Dendritic cell treated with granulocyte-macrophage colony-stimulating factor and Interleukin-4, amounts not matched to agents 40 ng/mL and 50 ng/mL, for 4 days (primary cell): ENCODE measurements at regions of chr20 and their contacts with region 1.

Region 1: GRCh38 chr20:5529331-5530148 is 212.8 kb upstream of the PROKR2 start:
- H3K4me3 Mint-ChIP-seq: no peak overlapping the region
- H3K27ac Mint-ChIP-seq: no peak overlapping the region
- H3K4me1 Mint-ChIP-seq: peaks cover 66% of the 10 kb centered on the region
- H3K27me3 Mint-ChIP-seq: no peaks in the 10 kb centered on the region

Region 2: DNA sequence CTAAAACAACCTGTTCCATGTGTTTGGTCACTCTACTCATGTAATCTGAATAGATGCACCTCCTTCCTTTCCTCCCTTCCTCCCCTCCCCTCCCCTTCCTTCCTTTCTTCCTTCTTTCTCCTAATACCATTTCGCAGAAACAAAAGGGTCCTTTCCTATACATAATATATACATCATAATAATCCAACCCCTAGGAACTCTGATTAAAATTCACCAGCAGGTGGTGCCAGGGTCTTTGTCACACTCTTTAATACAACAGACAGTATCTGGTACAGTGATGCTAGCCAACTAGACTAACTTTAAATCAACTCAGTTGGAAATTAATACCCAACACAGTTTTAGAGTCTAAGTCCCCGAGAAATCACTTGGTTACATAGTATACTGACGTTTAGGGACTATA is 39.5 kb after region 1 on chr20:
- intact Hi-C with region 1: loop called (anchors 5 kb)
- H3K4me3 Mint-ChIP-seq: no peak overlapping the region
- H3K27ac Mint-ChIP-seq: peak overlapping the region; percentile 83
- H3K4me1 Mint-ChIP-seq: peaks cover 25% of the 10 kb centered on the region
- H3K27me3 Mint-ChIP-seq: no peaks in the 10 kb centered on the region

Region 3: GRCh38 chr20:5680192-5680591 is 150.7 kb after region 1 on chr20:
- intact Hi-C with region 1: no loop called
- H3K4me3 Mint-ChIP-seq: no peak overlapping the region
- H3K27ac Mint-ChIP-seq: no peak overlapping the region
- H3K4me1 Mint-ChIP-seq: peaks cover 12% of the 10 kb centered on the region
- H3K27me3 Mint-ChIP-seq: no peaks in the 10 kb centered on the region

Region 4: DNA sequence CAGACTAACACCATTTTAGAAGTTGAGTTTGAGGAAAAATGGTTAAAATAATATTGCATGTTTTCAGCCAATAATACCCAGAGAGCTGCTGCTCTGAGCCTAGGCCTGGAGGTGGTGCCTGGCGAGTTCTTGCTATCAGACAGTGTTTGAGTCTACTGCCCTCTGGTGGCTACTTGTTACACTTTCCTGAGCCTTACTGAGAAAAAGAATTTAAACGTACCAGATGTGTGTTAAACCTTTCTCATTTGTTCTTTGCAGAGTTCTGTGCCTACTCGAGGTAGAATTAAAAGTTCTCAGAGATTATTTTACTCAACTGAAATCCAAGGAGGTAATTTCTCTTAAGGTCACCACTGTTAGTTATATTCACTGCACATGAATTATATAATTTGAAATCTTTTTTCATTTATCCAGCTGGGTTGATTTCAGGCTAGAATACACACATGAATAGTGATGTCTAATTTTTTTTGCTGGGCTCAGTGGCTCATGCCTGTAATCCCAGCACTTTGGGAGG is 258.9 kb after region 1 on chr20:
- intact Hi-C with region 1: loop called (anchors 1 kb)
- H3K4me3 Mint-ChIP-seq: no peak overlapping the region
- H3K27ac Mint-ChIP-seq: no peak overlapping the region
- H3K4me1 Mint-ChIP-seq: peaks cover 9% of the 10 kb centered on the region
- H3K27me3 Mint-ChIP-seq: no peaks in the 10 kb centered on the region

Region 5: DNA sequence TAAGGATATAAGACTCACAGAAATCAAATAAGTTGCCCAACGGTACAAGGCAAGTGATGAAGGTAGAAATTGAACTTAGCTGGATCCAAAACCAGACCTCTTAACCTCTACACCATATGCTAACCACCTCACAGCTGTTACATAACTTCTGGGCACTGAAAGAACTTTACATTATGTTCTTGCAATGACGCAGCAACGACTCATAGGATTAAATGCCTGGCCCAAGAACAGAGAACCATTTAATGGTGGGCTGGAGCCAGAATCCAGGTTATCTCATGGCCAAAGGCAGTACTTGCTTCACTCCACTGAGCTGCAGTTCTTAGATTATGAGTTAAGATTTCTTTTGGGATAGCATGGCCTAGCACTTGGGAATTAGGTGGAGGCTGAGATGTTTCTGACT is 416.4 kb after region 1 on chr20:
- intact Hi-C with region 1: loop called (anchors 10 kb)
- H3K4me3 Mint-ChIP-seq: no peak overlapping the region
- H3K27ac Mint-ChIP-seq: peak overlapping the region; percentile 96
- H3K4me1 Mint-ChIP-seq: peaks cover 45% of the 10 kb centered on the region
- H3K27me3 Mint-ChIP-seq: no peaks in the 10 kb centered on the region

Region 6: GRCh38 chr20:6074145-6074561 is 544.6 kb after region 1 on chr20:
- intact Hi-C with region 1: loop called (anchors 1 kb)
- H3K4me3 Mint-ChIP-seq: no peak overlapping the region
- H3K27ac Mint-ChIP-seq: no peak overlapping the region
- H3K4me1 Mint-ChIP-seq: no peaks in the 10 kb centered on the region
- H3K27me3 Mint-ChIP-seq: no peaks in the 10 kb centered on the region